Esophagus squamous epithelium (tissue), 5 donors: ENCODE measurements at regions of chr4 and their contacts with region 1.

Region 1: DNA sequence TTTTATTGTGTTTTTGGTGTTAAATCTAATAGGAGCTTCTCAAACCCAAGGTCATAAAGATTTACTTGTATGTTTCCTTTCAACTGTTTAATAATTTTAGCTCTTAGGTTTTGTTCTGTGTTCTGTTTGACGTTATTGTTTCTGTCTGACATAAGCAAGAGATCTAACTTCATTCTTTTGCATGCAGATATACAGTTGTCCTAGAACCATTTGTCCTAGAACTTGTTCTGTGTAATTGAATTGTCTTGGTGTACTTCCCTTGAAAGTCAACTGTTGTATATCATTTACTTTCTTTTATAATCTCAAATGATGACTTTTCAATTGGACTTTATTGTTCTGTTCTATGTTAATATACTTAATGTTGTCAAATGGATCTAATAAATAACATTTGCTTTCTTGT is 977.1 kb downstream of the FAT4 start:
- DNase-seq: no peak
- H3K4me3 ChIP-seq: no peak overlapping the region
- H3K27ac ChIP-seq: no peak overlapping the region
- H3K4me1 ChIP-seq: no peaks in the 10 kb centered on the region
- H3K27me3 ChIP-seq: no peaks in the 10 kb centered on the region
- CTCF ChIP-seq: no peak
- POLR2A ChIP-seq: no peak

Region 2: DNA sequence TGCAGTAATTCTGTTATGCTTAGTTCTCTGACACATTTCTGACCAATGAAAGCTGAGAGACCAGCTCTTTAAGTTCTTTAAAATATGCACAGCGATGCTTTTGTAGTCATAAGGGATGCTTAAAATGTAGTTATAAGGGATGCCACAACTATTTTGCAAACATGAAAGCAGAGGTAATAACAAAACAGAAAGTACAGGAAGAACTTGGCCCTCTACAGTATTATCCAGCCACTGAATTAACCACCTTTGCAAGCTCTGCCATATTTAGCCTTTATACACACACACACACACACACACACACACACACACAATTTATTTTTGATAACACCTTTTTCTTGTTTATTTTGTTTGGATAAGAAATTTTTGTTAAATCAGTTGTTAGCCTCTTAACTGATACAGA is 387.1 kb before region 1 on chr4:
- intact Hi-C with region 1: no loop called
- DNase-seq: no peak
- H3K4me3 ChIP-seq: no peak overlapping the region
- H3K27ac ChIP-seq: no peak overlapping the region
- H3K4me1 ChIP-seq: no peaks in the 10 kb centered on the region
- H3K27me3 ChIP-seq: no peaks in the 10 kb centered on the region
- CTCF ChIP-seq: no peak
- POLR2A ChIP-seq: no peak

Region 3: GRCh38 chr4:126604268-126604867 is 312.5 kb after region 1 on chr4:
- intact Hi-C with region 1: loop called (anchors 10 kb)
- DNase-seq: no peak
- H3K4me3 ChIP-seq: no peak overlapping the region
- H3K27ac ChIP-seq: no peak overlapping the region
- H3K4me1 ChIP-seq: no peaks in the 10 kb centered on the region
- H3K27me3 ChIP-seq: no peaks in the 10 kb centered on the region
- CTCF ChIP-seq: peak in 4 of 6 experiments; percentile 38 to 51 (median 42)
- POLR2A ChIP-seq: no peak

Region 4: DNA sequence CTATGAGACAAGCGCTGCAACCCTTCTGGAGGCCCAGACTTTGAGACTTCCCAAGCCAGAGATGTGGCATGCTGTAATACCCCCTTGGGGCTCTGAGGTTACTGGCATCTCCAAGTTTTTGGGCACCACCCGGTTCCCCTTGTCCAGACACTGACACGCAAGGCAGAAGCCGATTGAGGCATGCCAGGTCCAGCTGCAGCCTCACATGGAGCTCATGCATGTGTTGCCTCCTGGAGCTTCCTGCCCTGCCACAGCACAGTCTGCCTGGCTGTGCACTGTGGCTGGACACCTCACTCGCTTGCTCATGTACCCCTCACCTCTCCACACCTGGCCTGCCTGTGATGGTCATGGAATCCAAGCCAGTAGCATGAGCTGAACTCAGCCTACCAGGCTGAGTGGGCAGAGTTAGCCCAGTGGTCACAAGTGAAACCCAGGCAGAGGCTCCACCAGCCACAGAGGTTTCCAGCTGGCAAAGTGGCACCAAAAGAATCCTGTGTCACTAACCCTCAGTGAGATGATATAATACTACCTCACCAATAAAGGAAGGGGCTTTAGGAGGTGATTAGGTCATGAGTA is 551.7 kb after region 1 on chr4:
- intact Hi-C with region 1: no loop called
- DNase-seq: no peak
- H3K4me3 ChIP-seq: no peak overlapping the region
- H3K27ac ChIP-seq: no peak overlapping the region
- H3K4me1 ChIP-seq: no peaks in the 10 kb centered on the region
- H3K27me3 ChIP-seq: peaks cover 0 to 23% (median 0%) of the 10 kb centered on the region in 4 donors
- CTCF ChIP-seq: no peak
- POLR2A ChIP-seq: no peak